Aorta (tissue), 5 donors: ENCODE measurements at regions of chr14 and their contacts with region 1.

Region 1: GRCh38 chr14:37034410-37035285 is 137.8 kb downstream of the SLC25A21 start:
- DNase-seq: no peak
- ATAC-seq: peak; percentile 76
- H3K4me3 ChIP-seq: no peak overlapping the region
- H3K27ac ChIP-seq: peak overlapping the region; percentile 61 to 89
- H3K4me1 ChIP-seq: peaks cover 5 to 8% of the 10 kb centered on the region in 2 donors
- H3K27me3 ChIP-seq: no peaks in the 10 kb centered on the region

Region 2: GRCh38 chr14:36661756-36662498 is 372.7 kb before region 1 on chr14 and contains the start of gene PAX9:
- intact Hi-C with region 1: loop called in 1 of 2 experiments (anchors 10 kb)
- DNase-seq: peak; percentile 76 to 92
- ATAC-seq: peak; percentile 81
- H3K4me3 ChIP-seq: peak within 1 kb of the TSS; percentile 18 to 27
- H3K27ac ChIP-seq: no peak within 1 kb of the TSS
- H3K4me1 ChIP-seq: no peaks in the 10 kb centered on the region
- H3K27me3 ChIP-seq: peaks cover 0 to 3% of the 10 kb centered on the region in 2 donors
- total RNA-seq, gene PAX9: 0.48 to 3.4 TPM

Region 3: DNA sequence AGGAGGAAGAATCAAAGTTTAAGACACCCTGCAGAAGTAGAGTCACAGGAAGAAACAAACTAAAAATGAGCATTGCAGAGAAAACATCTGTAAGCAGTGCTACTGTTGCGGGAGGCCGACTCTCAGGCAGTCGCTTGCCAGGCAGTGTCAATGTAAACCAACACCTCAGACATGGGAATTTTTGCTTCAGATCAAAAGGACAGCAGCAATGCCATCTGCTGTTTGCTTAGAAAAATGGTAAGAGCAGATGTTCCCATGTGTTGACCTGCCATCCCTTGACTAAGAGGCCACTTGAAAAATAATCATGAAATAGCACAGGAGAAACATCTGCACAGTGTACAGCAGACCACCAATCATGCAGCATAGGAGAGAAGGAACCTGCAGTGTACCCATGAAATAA is 58.8 kb before region 1 on chr14:
- intact Hi-C with region 1: loop called in 1 of 2 experiments (anchors 5 kb)
- DNase-seq: no peak
- ATAC-seq: no peak
- H3K4me3 ChIP-seq: no peak overlapping the region
- H3K27ac ChIP-seq: no peak overlapping the region
- H3K4me1 ChIP-seq: peaks cover 3 to 7% of the 10 kb centered on the region in 2 donors
- H3K27me3 ChIP-seq: no peaks in the 10 kb centered on the region

Region 4: DNA sequence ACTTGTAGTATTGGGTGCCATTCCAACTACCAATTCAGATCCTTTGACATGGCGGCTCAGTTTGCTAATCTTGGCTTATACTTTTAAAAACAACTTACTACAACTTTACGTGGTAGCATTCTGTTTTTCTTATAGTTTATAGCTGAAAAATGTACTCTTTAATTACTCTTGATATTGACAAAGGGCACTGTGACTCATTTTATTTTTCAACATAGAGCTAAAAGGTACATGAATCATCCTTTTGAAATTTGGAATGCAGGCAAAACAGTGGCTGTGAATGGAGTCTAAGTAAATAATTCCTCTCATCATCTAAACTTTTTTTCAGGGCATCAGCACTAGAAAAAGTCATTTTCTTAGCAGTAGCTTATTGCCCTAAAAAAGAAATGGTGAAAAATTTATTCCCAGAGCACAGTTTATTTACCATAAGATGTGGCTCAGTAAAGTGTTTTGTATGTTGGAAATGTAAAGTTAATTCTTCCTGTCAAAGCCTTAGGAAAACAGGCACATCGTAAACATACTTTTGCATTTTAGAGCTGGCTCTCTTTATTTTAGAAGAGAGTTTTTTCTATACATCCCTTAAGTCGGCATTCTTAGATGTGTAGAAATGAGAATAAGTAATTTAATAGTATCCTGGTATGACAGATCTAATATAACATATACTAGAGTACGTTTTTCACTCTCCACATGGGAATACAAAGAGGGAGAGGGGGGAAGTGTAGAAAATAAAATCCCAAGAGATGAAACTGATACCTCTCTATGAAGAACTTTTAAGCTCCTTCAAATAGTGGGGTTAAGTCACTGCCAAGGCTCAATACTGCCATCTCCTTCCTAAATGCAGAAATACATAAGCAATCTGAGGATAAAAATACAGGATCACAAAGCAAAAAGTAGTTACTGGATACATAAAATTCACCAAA is 82.5 kb after region 1 on chr14:
- intact Hi-C with region 1: loop called (anchors 5 kb)
- DNase-seq: no peak
- ATAC-seq: no peak
- H3K4me3 ChIP-seq: peak overlapping the region in 1 of 2 donors; percentile 41
- H3K27ac ChIP-seq: no peak overlapping the region
- H3K4me1 ChIP-seq: no peaks in the 10 kb centered on the region
- H3K27me3 ChIP-seq: no peaks in the 10 kb centered on the region

Region 5: GRCh38 chr14:37122254-37122653 is 87.6 kb after region 1 on chr14:
- intact Hi-C with region 1: loop called (anchors 5 kb)
- DNase-seq: no peak
- ATAC-seq: no peak
- H3K4me3 ChIP-seq: no peak overlapping the region
- H3K27ac ChIP-seq: no peak overlapping the region
- H3K4me1 ChIP-seq: no peaks in the 10 kb centered on the region
- H3K27me3 ChIP-seq: no peaks in the 10 kb centered on the region